HEK293 (cell line): ENCODE measurements at regions of chr1 and their contacts with region 1.

Region 1: GRCh38 chr1:16625497-16626408 is 12.4 kb upstream of the NBPF1 start:
- H3K4me3 ChIP-seq: no peak overlapping the region
- H3K27ac ChIP-seq: no peak overlapping the region
- H3K4me1 ChIP-seq: no peaks in the 10 kb centered on the region
- CTCF ChIP-seq: no peak

Region 2: GRCh38 chr1:16607433-16607851 is 18.3 kb before region 1 on chr1:
- CTCF ChIA-PET with region 1: interaction called, 29 read pairs
- POLR2A ChIA-PET with region 1: interaction called, 12 read pairs
- H3K4me3 ChIP-seq: no peak overlapping the region
- H3K27ac ChIP-seq: no peak overlapping the region
- H3K4me1 ChIP-seq: peaks cover 10% of the 10 kb centered on the region
- CTCF ChIP-seq: no peak

Region 3: DNA sequence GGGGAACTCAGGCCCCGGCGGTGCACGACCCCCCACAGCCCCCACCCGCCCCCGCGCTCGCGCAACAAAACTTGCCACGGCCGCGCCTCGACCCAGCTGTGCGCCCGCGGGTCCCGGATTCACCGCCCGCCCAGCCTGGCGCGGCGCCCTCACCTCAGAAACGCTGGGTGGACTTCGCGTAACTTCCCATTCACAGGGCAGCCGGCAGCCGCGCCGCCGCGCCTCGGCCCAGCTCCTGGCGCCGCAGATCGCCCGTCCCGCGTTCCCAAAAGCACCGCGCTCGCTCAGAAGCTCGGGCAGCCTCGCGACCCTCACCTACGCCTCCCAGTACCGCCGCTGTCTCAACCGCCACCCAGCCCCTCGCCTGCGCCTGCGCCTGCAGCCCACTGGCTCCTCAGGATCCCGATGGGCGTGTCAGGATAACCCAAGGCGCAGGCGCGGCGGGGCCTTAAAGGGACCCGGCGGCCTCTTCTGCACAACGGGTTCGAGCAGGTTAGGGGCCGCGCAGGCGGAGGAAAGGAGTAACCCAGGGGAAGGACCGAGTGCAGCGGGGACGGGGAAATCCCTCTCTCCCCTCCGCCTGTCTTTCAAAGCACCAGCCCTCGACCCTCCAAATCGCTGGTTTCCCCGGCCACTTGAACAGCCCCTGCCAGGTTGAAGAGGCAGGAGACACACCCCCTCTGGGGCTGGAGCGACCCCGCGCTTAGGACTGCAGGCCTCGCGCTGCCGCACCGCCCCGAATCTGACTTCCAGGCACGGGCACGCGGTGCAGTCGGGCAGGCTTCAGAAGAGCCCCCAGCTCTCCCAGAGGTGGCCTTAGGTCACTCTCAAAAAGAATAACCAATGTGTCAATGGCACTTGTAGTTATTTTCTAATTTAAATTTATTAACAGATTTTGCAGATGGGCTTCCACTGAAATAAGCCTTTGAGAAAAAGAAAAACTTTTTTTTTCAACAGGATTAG is 12.3 kb before region 1 on chr1 and contains the start of gene NBPF1:
- CTCF ChIA-PET with region 1: interaction called, 29 read pairs
- POLR2A ChIA-PET with region 1: interaction called, 12 read pairs
- H3K4me3 ChIP-seq: peak within 1 kb of the TSS; percentile 86
- H3K27ac ChIP-seq: peak within 1 kb of the TSS; percentile 62; the same call in 1 of the 2 replicates
- H3K4me1 ChIP-seq: peaks cover 13% of the 10 kb centered on the region
- CTCF ChIP-seq: peak; percentile 87

Region 4: DNA sequence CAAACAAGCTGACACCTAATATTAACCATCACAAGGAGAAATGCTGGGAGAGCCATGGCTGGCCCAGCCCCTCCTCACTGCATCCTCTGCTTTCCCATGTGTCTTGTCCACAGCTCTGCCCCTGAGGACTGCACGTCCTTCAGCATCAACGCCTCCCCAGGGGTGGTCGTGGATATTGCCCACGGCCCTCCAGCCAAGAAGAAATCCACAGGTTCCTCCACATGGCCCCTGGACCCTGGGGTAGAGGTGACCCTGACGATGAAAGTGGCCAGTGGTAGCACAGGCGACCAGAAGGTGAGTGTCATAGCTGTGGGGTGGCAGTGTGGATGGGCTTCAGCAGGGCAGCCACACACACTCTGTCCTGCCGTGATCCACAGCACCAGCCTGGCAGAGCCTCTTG is 705.1 kb after region 1 on chr1:
- CTCF ChIA-PET with region 1: no interaction called
- POLR2A ChIA-PET with region 1: no interaction called
- H3K4me3 ChIP-seq: no peak overlapping the region
- H3K27ac ChIP-seq: no peak overlapping the region
- H3K4me1 ChIP-seq: no peaks in the 10 kb centered on the region
- CTCF ChIP-seq: no peak